ENCODE measurements at regions of chr5 and their contacts with region 1.

Region 1: GRCh38 chr5:163347671-163348070 is 89.7 kb upstream of the CCNG1 start:
- DNase-seq: no peak
- ATAC-seq: no peak

Region 2: DNA sequence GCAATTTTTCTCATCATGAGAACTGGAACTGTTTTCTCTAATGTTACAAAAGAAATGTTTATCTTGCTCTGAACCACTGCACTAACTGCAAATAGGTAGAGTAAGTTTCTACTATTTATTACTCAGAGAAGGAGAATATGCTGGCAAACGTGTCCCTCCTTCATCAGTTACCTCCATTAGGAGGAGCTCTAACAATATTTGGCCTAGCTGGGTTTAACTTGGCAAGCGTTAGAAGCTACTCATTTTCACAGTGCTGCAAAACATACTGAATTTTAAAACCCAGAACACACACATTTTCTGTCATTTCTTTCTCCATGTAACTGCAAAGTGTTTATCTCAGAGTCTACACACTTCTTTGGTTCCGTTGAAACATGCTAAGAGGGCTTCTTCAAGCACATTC is 1381.1 kb before region 1 on chr5:
- intact Hi-C with region 1: loop called (anchors 5 kb)
- DNase-seq: no peak
- ATAC-seq: no peak

Region 3: DNA sequence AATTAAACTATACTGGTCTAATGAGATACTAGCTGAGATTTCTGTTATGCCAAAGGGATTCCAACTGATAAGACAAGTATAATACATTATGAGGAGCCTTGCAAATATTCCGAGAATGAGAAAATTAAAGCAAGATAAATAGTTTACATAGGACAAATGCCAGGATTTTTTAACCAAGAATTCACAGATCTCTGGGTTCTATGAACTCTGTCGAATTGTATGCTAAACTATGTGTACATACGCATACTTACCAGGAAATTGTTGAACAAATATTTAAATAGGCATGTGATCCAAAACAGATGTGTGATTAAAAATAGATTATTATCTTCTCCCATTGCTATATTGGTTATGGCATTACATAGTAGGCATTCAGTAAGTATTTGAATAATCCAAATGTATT is 663.5 kb before region 1 on chr5:
- intact Hi-C with region 1: no loop called
- DNase-seq: no peak
- ATAC-seq: no peak

Region 4: DNA sequence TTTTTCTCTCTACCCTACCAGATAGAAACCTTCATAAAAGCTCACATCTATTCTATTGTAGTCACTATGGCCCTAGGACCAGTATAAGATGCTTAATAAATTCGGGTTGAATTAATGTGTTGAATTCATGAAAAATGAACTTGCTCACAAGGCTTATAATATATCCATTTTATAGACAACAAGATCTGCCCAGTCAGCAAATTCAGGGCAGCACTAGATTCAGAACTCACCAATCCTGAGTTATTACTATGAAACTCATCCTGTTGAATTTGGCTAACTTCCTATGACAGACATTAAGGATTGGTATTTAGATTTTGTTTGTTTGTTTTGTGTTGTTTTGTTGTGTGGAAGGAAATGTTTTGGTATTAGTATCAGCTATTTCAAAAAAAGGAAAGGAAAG is 53.8 kb before region 1 on chr5:
- intact Hi-C with region 1: no loop called
- DNase-seq: no peak
- ATAC-seq: no peak